Naive thymus-derived CD8-positive, alpha-beta T cell (primary cell): ENCODE measurements at regions of chr2 and their contacts with region 1.

Region 1: GRCh38 chr2:84958135-84959044 is 12.6 kb upstream of the KCMF1 start:
- DNase-seq: no peak
- ATAC-seq: no peak
- H3K4me3 Mint-ChIP-seq: no peak overlapping the region
- H3K27ac Mint-ChIP-seq: peak overlapping the region in 8 of 10 donors; percentile 18 to 85 (median 42)
- H3K4me1 Mint-ChIP-seq: peaks cover 7 to 34% (median 16%) of the 10 kb centered on the region in 4 donors
- H3K27me3 Mint-ChIP-seq: no peaks in the 10 kb centered on the region

Region 2: DNA sequence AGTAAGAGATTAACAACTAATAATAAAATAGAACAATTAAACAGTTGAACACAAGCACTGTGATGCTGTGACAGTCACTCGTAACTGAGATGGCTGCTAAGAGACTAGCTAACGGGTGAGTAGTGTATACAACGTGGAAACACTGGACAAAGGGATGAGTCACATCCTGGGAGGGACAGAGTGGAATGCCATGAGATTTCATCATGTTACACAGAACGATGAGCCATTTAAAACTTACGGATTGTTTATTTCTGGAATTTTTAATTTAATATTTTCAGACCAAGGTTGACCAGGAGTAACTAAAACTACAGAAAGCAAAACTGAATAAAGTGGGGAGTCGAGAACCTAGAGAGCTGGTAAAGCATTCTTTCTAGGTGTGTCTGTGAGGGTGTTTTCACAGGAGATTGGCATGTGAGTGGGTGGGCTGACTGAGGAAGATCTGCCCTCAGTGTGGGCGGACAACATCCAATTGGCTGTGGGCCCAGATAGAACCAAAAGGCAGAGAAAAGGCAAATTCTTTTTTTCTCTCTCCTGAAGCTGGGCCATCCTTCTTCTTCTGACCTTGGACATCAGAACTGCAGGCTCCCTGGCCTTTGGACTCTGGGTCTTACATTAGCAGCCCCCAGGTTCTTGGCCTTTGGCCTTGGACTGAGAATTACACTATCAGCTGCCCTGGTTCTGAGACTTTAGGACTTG is 38.4 kb before region 1 on chr2:
- POLR2A ChIA-PET with region 1: no interaction called
- DNase-seq: peak in 6 of 10 donors; percentile 42 to 68 (median 51)
- ATAC-seq: peak; percentile 75 to 81
- H3K4me3 Mint-ChIP-seq: peak overlapping the region; percentile 42 to 82 (median 68)
- H3K27ac Mint-ChIP-seq: peak overlapping the region; percentile 56 to 99 (median 91)
- H3K4me1 Mint-ChIP-seq: peaks cover 20 to 63% (median 55%) of the 10 kb centered on the region in 4 donors
- H3K27me3 Mint-ChIP-seq: no peaks in the 10 kb centered on the region

Region 3: DNA sequence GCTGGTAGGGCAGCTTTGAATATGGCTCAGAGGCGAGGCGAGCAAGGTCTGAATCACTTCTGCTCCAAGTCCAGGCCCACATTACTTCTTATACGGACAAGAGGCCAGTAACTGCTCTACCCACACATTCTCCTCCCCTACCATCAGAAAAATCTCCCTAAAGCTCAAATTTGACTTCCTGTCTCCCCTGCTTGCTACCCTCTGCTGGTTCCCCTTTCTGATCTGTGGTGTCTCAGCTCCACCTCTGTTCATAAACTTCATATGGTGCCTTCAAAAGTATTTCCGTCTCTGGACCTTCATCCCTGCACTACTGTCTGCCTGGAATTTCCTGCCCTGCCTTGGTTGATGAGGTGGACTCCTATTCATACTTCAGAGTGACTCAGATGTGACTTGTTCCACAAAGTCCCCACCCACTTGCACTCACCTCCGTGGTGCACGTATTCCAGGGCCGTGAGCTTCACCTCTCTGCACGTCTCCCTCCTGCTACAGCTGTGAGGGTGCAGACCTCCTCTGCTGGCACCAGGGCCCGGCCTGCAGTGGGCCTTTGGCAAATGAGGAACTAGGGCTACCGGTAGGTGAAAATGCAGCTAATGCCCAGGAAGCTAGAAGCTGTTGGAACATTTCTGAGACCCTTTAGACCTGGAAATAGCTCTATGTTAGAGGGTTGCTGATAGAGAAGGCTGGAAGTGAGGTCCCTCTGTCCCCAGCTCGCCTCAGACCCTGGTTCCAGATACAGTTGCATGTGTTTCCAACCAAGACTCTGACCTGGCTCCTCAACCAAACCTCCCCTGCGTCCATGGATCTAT is 12.0 kb before region 1 on chr2:
- POLR2A ChIA-PET with region 1: interaction called, 11 read pairs
- DNase-seq: peak in 9 of 10 donors; percentile 16 to 64 (median 32)
- ATAC-seq: peak; percentile 85 to 87
- H3K4me3 Mint-ChIP-seq: peak overlapping the region; percentile 62 to 82 (median 74)
- H3K27ac Mint-ChIP-seq: peak overlapping the region; percentile 66 to 95 (median 88)
- H3K4me1 Mint-ChIP-seq: peaks cover 20 to 41% (median 33%) of the 10 kb centered on the region in 4 donors
- H3K27me3 Mint-ChIP-seq: no peaks in the 10 kb centered on the region